ENCODE measurements at regions of chr12 and their contacts with region 1.

Region 1: DNA sequence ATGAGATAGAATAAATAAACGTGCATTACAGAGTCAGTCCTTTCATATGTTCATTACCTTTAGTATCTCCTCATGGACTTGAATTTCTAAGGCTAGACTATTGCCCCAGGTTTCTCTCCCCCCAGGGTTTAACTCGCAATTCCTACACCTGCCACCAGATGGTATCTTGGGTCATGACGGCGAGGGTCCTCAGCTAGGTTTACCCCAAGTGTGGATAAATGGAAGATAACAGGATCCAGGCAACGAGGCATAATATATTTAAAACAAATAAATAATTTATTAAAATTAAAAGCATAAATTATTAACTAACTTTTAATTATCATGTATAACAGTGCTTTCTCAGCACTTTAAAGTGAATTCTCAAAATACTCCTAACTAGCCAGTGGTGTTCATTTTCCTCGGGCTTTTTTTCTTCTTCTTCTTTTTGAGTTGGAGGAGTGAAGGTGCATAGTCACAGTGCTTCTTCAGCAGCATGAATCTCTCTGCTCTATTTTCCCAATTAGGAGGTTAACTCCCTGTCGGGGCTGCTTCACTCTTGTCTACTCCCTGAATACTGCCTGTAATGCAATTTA is 243.5 kb upstream of the CAND1 start:
- DNase-seq: no peak
- ATAC-seq: peak; percentile 82
- H3K4me3 ChIP-seq: no peak overlapping the region
- H3K27ac ChIP-seq: no peak overlapping the region
- H3K4me1 ChIP-seq: no peaks in the 10 kb centered on the region
- H3K27me3 ChIP-seq: no peaks in the 10 kb centered on the region
- CTCF ChIP-seq: peak; percentile 53 to 77 (median 69); a peak in 5 of 6 replicates
- EP300 ChIP-seq: no peak
- POLR2A ChIP-seq: no peak
- RAD21 ChIP-seq: peak; percentile 57

Region 2: DNA sequence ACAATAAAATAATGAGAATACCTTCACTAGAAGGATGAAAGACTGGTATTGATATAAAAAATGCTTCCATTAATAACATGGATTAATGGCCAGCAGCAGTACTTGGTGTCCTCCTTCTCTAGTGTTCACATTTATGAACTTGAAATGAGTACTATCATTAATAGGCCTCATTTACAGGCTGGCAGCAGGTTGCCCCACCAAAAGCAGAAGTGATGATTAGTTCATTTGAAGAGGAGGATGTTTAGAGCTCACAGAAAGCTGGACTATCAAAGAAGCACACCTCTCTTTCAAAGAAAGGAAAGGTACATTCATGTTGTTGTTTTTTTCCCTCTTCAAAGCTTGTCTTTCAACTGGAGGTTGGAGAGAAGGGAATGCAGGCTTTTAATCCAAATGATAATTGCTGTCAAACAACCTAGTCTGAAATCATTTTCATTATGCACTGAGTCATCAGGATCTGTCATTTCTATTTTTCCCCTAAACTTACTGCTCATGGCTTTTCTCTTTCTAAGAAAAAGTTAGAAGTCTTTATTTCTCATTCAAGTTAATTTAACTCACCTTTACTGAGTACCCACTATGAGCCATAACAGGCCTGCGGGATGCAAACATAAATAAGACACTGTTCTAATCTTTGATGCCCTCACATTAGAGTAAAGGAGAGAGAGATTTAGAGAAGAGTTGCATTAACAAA is 188.9 kb before region 1 on chr12:
- CTCF ChIA-PET with region 1: no interaction called
- POLR2A ChIA-PET with region 1: no interaction called
- RAD21 ChIA-PET with region 1: no interaction called
- SMC1A ChIA-PET with region 1: no interaction called
- in situ Hi-C with region 1: no loop called
- intact Hi-C with region 1: no loop called
- DNase-seq: no peak
- ATAC-seq: no peak
- H3K4me3 ChIP-seq: no peak overlapping the region
- H3K27ac ChIP-seq: no peak overlapping the region
- H3K4me1 ChIP-seq: no peaks in the 10 kb centered on the region
- H3K27me3 ChIP-seq: no peaks in the 10 kb centered on the region
- CTCF ChIP-seq: no peak
- EP300 ChIP-seq: no peak
- POLR2A ChIP-seq: no peak
- RAD21 ChIP-seq: no peak

Region 3: DNA sequence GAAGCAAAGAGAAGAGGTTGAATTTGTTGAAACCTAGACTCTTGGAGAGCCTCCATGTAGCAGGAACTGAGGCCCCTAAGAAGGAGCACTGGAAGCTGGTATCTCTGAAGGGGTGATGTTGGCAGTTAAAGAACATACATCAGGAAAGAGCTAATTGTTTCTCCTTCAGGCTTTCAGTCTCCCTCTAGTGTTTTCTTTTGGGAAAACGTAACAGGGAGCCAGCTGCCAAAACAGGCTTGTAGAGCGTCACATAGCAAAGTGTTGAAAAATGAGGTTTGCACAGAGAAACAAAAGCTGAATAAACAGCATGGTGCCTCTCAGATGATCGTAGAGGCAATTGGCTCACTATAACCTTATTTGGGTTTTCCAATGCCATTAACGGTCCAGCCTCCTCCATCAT is 196.7 kb after region 1 on chr12:
- CTCF ChIA-PET with region 1: interaction called, 4 read pairs
- POLR2A ChIA-PET with region 1: no interaction called
- RAD21 ChIA-PET with region 1: no interaction called
- SMC1A ChIA-PET with region 1: no interaction called
- in situ Hi-C with region 1: no loop called
- intact Hi-C with region 1: loop called (anchors 5 kb)
- DNase-seq: no peak
- ATAC-seq: no peak
- H3K4me3 ChIP-seq: no peak overlapping the region
- H3K27ac ChIP-seq: no peak overlapping the region
- H3K4me1 ChIP-seq: no peaks in the 10 kb centered on the region
- H3K27me3 ChIP-seq: no peaks in the 10 kb centered on the region
- CTCF ChIP-seq: 0 out of 6 replicates have a peak, but pooled peaks of 1 of the 3 experiments have one; percentile 2
- EP300 ChIP-seq: no peak
- POLR2A ChIP-seq: no peak
- RAD21 ChIP-seq: no peak